ENCODE measurements at regions of chr15 and their contacts with region 1.

Region 1: GRCh38 chr15:84716036-84716799 is at the start of gene SEC11A:
- DNase-seq: peak; percentile 91
- H3K4me3 Mint-ChIP-seq: peak within 1 kb of the TSS; percentile 94
- H3K27ac Mint-ChIP-seq: peak within 1 kb of the TSS; percentile 96
- H3K4me1 Mint-ChIP-seq: peaks cover 59% of the 10 kb centered on the region
- H3K27me3 Mint-ChIP-seq: no peaks in the 10 kb centered on the region
- total RNA-seq, gene SEC11A: 97.3 and 105 TPM in 2 replicates

Region 2: DNA sequence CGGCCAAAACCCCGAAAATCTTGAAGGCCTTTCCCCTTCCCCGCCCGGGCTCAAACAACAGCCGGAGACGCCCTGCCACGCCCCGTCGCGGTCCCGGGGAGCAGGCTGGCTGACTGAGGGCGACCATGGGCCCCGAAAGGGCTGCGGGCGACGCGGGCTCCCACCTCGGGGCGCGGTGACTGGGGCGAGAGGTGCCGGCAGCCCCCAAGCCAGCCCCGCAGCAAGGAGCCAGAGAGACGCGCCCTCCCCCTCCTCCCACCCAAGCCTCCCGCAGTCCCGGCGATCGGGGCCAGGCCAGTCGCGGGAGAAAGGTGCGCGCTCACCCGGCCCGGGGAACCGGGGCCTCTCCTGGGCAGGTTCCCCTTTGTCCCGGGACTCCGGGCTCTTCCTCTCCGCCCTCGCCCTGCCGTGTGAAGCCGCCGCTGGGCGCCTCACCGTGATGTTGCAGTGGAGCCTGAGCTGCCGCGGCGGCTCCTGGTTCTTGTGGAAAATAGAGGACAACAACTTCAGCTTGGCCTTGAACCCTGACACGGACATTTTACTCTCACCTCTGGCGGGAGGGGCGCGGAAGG is 146.0 kb before region 1 on chr15:
- intact Hi-C with region 1: loop called (anchors 1 kb)
- DNase-seq: peak; percentile 52
- H3K4me3 Mint-ChIP-seq: peak overlapping the region; percentile 84
- H3K27ac Mint-ChIP-seq: peak overlapping the region; percentile 90
- H3K4me1 Mint-ChIP-seq: peaks cover 11% of the 10 kb centered on the region
- H3K27me3 Mint-ChIP-seq: peaks cover 17% of the 10 kb centered on the region

Region 3: GRCh38 chr15:84633311-84634227 is 82.6 kb before region 1 on chr15:
- intact Hi-C with region 1: loop called (anchors 1 kb)
- DNase-seq: peak; percentile 60
- H3K4me3 Mint-ChIP-seq: peak overlapping the region; percentile 95
- H3K27ac Mint-ChIP-seq: peak overlapping the region; percentile 98
- H3K4me1 Mint-ChIP-seq: peaks cover 57% of the 10 kb centered on the region
- H3K27me3 Mint-ChIP-seq: no peaks in the 10 kb centered on the region

Region 4: GRCh38 chr15:84681831-84682230 is 34.4 kb before region 1 on chr15:
- intact Hi-C with region 1: no loop called
- DNase-seq: no peak
- H3K4me3 Mint-ChIP-seq: no peak overlapping the region
- H3K27ac Mint-ChIP-seq: peak overlapping the region; percentile 44
- H3K4me1 Mint-ChIP-seq: peaks cover 9% of the 10 kb centered on the region
- H3K27me3 Mint-ChIP-seq: no peaks in the 10 kb centered on the region

Region 5: GRCh38 chr15:84734794-84735479 is 18.7 kb after region 1 on chr15:
- intact Hi-C with region 1: loop called (anchors 1 kb)
- DNase-seq: peak; percentile 67
- H3K4me3 Mint-ChIP-seq: peak overlapping the region; percentile 74
- H3K27ac Mint-ChIP-seq: peak overlapping the region; percentile 93
- H3K4me1 Mint-ChIP-seq: peaks cover 48% of the 10 kb centered on the region
- H3K27me3 Mint-ChIP-seq: no peaks in the 10 kb centered on the region

Region 6: GRCh38 chr15:84761607-84762131 is 45.5 kb after region 1 on chr15:
- intact Hi-C with region 1: loop called (anchors 1 kb)
- DNase-seq: no peak
- H3K4me3 Mint-ChIP-seq: no peak overlapping the region
- H3K27ac Mint-ChIP-seq: no peak overlapping the region
- H3K4me1 Mint-ChIP-seq: peaks cover 27% of the 10 kb centered on the region
- H3K27me3 Mint-ChIP-seq: no peaks in the 10 kb centered on the region